AG04450 (cell line): ENCODE measurements at regions of chr4 and their contacts with region 1.

Region 1: DNA sequence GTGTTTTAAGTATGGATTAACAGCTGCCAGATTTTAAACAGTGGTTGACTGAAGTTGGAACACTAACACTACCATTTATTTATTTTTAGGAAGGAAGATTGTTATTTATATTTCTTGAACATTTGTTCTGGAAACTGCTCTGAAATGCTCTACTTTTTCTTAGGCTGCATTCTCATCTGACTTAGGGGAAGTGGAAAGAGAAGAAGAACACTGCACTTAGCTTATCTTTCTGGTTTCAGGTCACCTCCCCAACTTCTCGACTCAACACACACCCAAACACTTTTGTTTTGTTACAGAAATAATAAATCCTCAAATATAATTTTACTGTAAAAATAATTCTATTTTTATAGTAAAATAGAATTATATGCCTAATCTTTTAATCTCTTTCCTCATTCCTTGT is 18.6 kb downstream of the BLTP1 start:
- DNase-seq: no peak
- H3K4me3 ChIP-seq: no peak overlapping the region
- H3K27ac ChIP-seq: no peak overlapping the region
- H3K27me3 ChIP-seq: no peaks in the 10 kb centered on the region
- CTCF ChIP-seq: no peak

Region 2: DNA sequence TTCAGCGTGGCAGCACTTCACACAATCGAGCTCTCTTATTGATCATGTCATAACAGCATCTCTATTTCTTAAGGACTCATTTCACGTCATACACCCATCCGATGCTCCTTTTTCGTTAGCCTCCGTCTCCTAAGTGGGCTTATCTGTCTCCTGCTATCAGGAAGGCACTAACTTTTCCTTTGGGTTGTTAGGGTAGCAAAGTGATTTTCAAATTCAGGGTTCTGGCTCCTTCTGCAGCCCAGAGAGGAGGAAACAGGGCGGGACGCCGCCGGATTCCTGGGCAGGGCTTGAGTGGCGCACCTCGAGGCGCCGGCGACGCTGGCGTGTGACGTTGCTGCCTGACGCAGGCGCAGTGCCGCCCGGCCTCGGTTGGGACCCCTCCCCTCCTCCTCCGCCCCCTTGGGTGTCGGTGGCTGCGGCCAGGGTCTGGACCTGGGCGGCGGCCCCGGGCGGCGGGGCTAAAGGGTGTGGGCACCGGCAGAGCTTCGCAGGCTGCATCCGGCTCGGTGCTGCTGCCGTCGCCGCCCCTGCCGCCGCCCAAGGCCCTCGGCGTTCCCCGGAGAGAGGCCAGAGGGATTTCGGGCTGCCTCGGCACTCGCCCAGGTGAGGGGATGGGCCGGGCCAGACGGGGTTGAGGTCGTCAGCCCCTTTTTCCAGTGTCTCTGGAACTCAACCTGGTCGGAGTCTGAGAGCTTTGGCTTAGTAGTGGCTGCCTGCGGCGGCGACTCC is 18.6 kb before region 1 on chr4 and contains the start of gene BLTP1:
- CTCF ChIA-PET with region 1: no interaction called
- POLR2A ChIA-PET with region 1: interaction called, 12 read pairs
- DNase-seq: peak; percentile 51
- H3K4me3 ChIP-seq: peak within 1 kb of the TSS; percentile 97
- H3K27ac ChIP-seq: peak within 1 kb of the TSS; percentile 21
- H3K27me3 ChIP-seq: no peaks in the 10 kb centered on the region
- CTCF ChIP-seq: no peak
- polyA plus RNA-seq, gene BLTP1: 48.2 and 69.3 TPM in 2 replicates